PC-9 (cell line): ENCODE measurements at regions of chr6 and their contacts with region 1.

Region 1: GRCh38 chr6:53651764-53652401 is 13.7 kb downstream of the KLHL31 start:
- DNase-seq: peak; percentile 82 to 89
- H3K4me3 ChIP-seq: peak overlapping the region; percentile 65
- H3K27ac ChIP-seq: peak overlapping the region; percentile 90
- H3K4me1 ChIP-seq: peaks cover 20% of the 10 kb centered on the region
- H3K27me3 ChIP-seq: no peaks in the 10 kb centered on the region
- CTCF ChIP-seq: no peak; the same call in 1 of the 2 replicates

Region 2: DNA sequence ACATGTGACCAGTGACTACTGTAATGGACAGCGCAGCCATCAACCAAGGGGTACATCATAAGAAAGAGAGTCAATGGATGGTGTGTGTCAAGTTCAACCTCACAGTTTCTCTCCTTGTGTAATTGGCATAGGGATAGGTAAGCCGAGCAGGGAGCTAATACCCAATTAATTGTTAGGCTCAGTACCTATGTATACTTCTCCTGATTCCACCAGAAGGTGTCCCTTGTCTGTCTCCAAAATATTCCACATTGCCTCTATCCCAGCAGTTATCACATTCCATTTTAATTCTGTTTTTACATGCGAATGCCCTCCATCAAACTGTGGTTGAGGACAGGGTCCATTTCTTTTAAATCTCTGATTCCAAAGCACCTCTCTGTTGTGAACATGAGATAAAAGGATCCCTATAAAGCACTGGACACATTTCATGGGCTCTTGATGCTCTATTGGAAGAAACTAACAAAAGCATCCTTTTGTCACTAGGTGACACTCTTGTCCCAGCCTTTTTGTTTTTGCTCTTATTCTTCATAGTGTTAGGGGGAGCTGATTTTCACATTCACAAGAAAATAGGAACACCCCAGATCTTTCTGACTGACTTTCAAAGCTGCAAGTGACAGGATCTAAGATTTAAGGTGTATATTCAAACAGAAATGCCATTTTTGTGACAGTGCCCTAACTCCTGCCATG is 547.7 kb before region 1 on chr6:
- CTCF ChIA-PET with region 1: no interaction called
- POLR2A ChIA-PET with region 1: no interaction called
- intact Hi-C with region 1: loop called (anchors 1 kb)
- DNase-seq: peak; percentile 21 to 42
- H3K4me3 ChIP-seq: no peak overlapping the region
- H3K27ac ChIP-seq: no peak overlapping the region
- H3K4me1 ChIP-seq: peaks cover 12% of the 10 kb centered on the region
- H3K27me3 ChIP-seq: no peaks in the 10 kb centered on the region
- CTCF ChIP-seq: peak; percentile 69

Region 3: GRCh38 chr6:53492860-53493634 is 158.8 kb before region 1 on chr6:
- CTCF ChIA-PET with region 1: interaction called, 5 read pairs
- POLR2A ChIA-PET with region 1: interaction called, 3 read pairs
- intact Hi-C with region 1: loop called (anchors 1 kb)
- DNase-seq: no peak
- H3K4me3 ChIP-seq: no peak overlapping the region
- H3K27ac ChIP-seq: no peak overlapping the region
- H3K4me1 ChIP-seq: peaks cover 17% of the 10 kb centered on the region
- H3K27me3 ChIP-seq: no peaks in the 10 kb centered on the region
- CTCF ChIP-seq: peak; percentile 80

Region 4: GRCh38 chr6:53544470-53545308 is 107.2 kb before region 1 on chr6 and contains the start of gene GCLC:
- CTCF ChIA-PET with region 1: no interaction called
- POLR2A ChIA-PET with region 1: no interaction called
- intact Hi-C with region 1: loop called (anchors 1 kb)
- DNase-seq: peak; percentile 85 to 95
- H3K4me3 ChIP-seq: peak within 1 kb of the TSS; percentile 79
- H3K27ac ChIP-seq: peak within 1 kb of the TSS; percentile 96
- H3K4me1 ChIP-seq: peaks cover 52% of the 10 kb centered on the region
- H3K27me3 ChIP-seq: no peaks in the 10 kb centered on the region
- CTCF ChIP-seq: peak; percentile 61; the same call in 1 of the 2 replicates
- total RNA-seq, gene GCLC: 213 and 254 TPM in 2 replicates

Region 5: GRCh38 chr6:53615633-53616449 is 36.0 kb before region 1 on chr6:
- CTCF ChIA-PET with region 1: interaction called, 3 read pairs
- POLR2A ChIA-PET with region 1: interaction called, 4 read pairs
- intact Hi-C with region 1: loop called (anchors 1 kb)
- DNase-seq: peak; percentile 73 to 100
- H3K4me3 ChIP-seq: peak overlapping the region; percentile 49
- H3K27ac ChIP-seq: peak overlapping the region; percentile 100
- H3K4me1 ChIP-seq: peaks cover 82% of the 10 kb centered on the region
- H3K27me3 ChIP-seq: no peaks in the 10 kb centered on the region
- CTCF ChIP-seq: 0 out of 2 replicates have a peak, but pooled peaks have one; percentile 28

Region 6: DNA sequence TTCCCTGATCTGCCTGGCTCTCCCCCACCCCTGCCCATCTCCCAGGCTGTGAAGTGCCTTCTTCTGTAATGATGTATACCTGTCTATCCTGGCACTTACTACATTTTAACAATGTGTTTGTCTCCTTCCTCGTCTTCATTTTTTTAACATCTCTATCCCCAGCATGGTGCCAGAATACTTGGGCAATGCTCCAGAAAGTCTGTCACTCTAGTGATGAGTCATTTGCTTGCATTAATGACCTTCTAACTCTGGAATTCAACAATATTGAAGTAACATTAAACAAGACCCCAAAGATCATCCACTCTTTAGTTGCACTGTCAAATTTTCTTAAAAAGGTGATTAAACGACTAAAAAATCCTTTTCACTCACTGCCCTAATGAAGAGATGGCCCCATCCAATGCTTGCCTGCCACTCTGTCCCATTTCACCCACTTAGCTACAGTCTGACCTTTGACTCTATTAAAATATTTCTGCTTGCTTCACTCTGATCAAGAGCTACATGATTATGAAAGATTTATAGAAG is 21.3 kb after region 1 on chr6:
- CTCF ChIA-PET with region 1: interaction called, 6 read pairs
- POLR2A ChIA-PET with region 1: no interaction called
- intact Hi-C with region 1: loop called (anchors 2 kb)
- DNase-seq: peak; percentile 68 to 89
- H3K4me3 ChIP-seq: peak overlapping the region; percentile 1; the same call in 1 of the 2 replicates
- H3K27ac ChIP-seq: peak overlapping the region; percentile 87
- H3K4me1 ChIP-seq: peaks cover 32% of the 10 kb centered on the region
- H3K27me3 ChIP-seq: no peaks in the 10 kb centered on the region
- CTCF ChIP-seq: no peak

Region 7: GRCh38 chr6:53718597-53719460 is 66.9 kb after region 1 on chr6:
- CTCF ChIA-PET with region 1: interaction called, 9 read pairs
- POLR2A ChIA-PET with region 1: no interaction called
- intact Hi-C with region 1: loop called (anchors 2 kb)
- DNase-seq: peak; percentile 33 to 70
- H3K4me3 ChIP-seq: no peak overlapping the region
- H3K27ac ChIP-seq: no peak overlapping the region
- H3K4me1 ChIP-seq: peaks cover 17% of the 10 kb centered on the region
- H3K27me3 ChIP-seq: no peaks in the 10 kb centered on the region
- CTCF ChIP-seq: peak; percentile 84

Region 8: DNA sequence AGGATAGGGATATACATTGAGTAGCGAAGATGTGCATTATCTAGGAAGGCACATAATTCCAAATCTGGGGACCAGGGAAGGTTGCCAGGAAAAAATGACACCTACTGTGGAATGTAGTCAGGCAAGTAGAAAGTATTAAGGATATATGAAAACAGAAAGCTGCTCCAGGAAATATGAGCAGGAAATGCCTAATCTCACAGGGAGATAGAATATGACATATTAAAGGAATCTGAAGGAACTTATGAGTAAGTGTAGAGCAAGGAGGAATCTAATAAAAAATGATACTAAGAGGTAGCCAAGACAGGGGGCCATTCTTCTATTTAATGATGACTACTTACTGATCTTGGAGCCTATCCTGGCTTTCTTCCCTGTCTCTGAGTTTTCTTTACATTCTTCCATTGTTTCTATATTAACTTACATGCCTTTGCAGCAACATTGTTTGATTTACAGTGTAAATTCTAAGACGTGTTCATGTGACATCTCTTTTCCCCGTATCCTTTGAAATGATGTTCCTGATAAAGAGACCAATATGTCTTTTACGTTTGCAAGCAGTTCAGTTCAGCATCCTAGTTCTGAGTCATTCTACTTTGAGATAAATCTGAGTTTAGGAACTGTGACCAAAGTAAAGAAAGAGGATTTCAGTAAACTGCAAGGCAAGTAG is 714.9 kb after region 1 on chr6:
- CTCF ChIA-PET with region 1: no interaction called
- POLR2A ChIA-PET with region 1: no interaction called
- intact Hi-C with region 1: no loop called
- DNase-seq: peak; percentile 39 to 47
- H3K4me3 ChIP-seq: no peak overlapping the region
- H3K27ac ChIP-seq: peak overlapping the region; percentile 30; the same call in 1 of the 2 replicates
- H3K4me1 ChIP-seq: peaks cover 14% of the 10 kb centered on the region
- H3K27me3 ChIP-seq: no peaks in the 10 kb centered on the region
- CTCF ChIP-seq: no peak